GM12878 (cell line): ENCODE measurements at regions of chr5 and their contacts with region 1.

Region 1: GRCh38 chr5:95730730-95731570 is at the start of gene RHOBTB3:
- DNase-seq: no peak
- ATAC-seq: peak; percentile 53
- H3K4me3 ChIP-seq: peak within 1 kb of the TSS; percentile 78
- H3K27ac ChIP-seq: peak within 1 kb of the TSS; percentile 70
- H3K4me1 ChIP-seq: peaks cover 21% of the 10 kb centered on the region
- H3K27me3 ChIP-seq: no peaks in the 10 kb centered on the region
- CTCF ChIP-seq: peak in 2 of 3 experiments; percentile 4 to 22; a peak in 3 of 6 replicates
- EP300 ChIP-seq: 0 out of 4 replicates have a peak, but pooled peaks of 1 of the 2 experiments have one; percentile 8
- POLR2A ChIP-seq: peak; percentile 77
- RAD21 ChIP-seq: no peak
- polyA plus RNA-seq, gene RHOBTB3: 3.6 to 4.1 TPM

Region 2: GRCh38 chr5:95327211-95327610 is 403.7 kb before region 1 on chr5:
- CTCF ChIA-PET with region 1: no interaction called
- POLR2A ChIA-PET with region 1: no interaction called
- RAD21 ChIA-PET with region 1: no interaction called
- SMC1A ChIA-PET with region 1: no interaction called
- in situ Hi-C with region 1: no loop called
- intact Hi-C with region 1: no loop called
- DNase-seq: no peak
- ATAC-seq: no peak
- H3K4me3 ChIP-seq: no peak overlapping the region
- H3K27ac ChIP-seq: no peak overlapping the region
- H3K4me1 ChIP-seq: no peaks in the 10 kb centered on the region
- H3K27me3 ChIP-seq: no peaks in the 10 kb centered on the region
- CTCF ChIP-seq: no peak
- EP300 ChIP-seq: no peak
- POLR2A ChIP-seq: no peak
- RAD21 ChIP-seq: no peak

Region 3: DNA sequence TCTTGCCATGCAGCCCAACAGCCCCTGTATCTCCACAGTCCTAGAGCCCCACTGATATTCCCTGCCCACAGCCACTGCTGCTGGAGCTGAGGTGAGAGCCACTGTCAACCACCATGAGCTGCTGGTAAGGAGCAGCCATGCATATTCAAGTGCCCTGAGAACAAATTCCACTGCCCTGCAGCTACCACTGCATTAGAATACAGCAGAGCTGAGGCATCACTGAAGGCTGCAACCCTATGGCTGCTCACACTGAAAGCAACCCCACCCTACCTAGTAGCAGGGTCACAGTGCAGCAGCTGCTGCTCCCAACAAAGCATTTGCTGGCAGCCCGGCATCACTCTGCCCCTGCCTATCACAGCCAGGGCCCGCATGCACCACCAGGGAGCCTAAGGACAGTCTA is 244.8 kb before region 1 on chr5:
- CTCF ChIA-PET with region 1: no interaction called
- POLR2A ChIA-PET with region 1: no interaction called
- RAD21 ChIA-PET with region 1: no interaction called
- SMC1A ChIA-PET with region 1: no interaction called
- in situ Hi-C with region 1: no loop called
- intact Hi-C with region 1: no loop called
- DNase-seq: no peak
- ATAC-seq: no peak
- H3K4me3 ChIP-seq: no peak overlapping the region
- H3K27ac ChIP-seq: no peak overlapping the region
- H3K4me1 ChIP-seq: no peaks in the 10 kb centered on the region
- H3K27me3 ChIP-seq: no peaks in the 10 kb centered on the region
- CTCF ChIP-seq: no peak
- EP300 ChIP-seq: no peak
- POLR2A ChIP-seq: no peak
- RAD21 ChIP-seq: no peak

Region 4: GRCh38 chr5:95554647-95555548 is 176.1 kb before region 1 on chr5 and contains the starts of genes ARSK and SKIC3:
- CTCF ChIA-PET with region 1: interaction called, 3 read pairs
- POLR2A ChIA-PET with region 1: interaction called, 4 read pairs
- RAD21 ChIA-PET with region 1: interaction called, 3 read pairs
- SMC1A ChIA-PET with region 1: no interaction called
- in situ Hi-C with region 1: no loop called
- intact Hi-C with region 1: loop called (anchors 10 kb)
- DNase-seq: peak; percentile 99
- ATAC-seq: peak; percentile 94
- H3K4me3 ChIP-seq: peak within 1 kb of the TSS; percentile 87
- H3K27ac ChIP-seq: peak within 1 kb of the TSS; percentile 80
- H3K4me1 ChIP-seq: peaks cover 4% of the 10 kb centered on the region; the same call in 1 of the 2 replicates
- H3K27me3 ChIP-seq: no peaks in the 10 kb centered on the region
- CTCF ChIP-seq: peak in 2 of 3 experiments; percentile 27 to 33; a peak in 4 of 6 replicates
- EP300 ChIP-seq: no peak
- POLR2A ChIP-seq: peak; percentile 91
- RAD21 ChIP-seq: no peak
- polyA plus RNA-seq, gene ARSK: 1.6 to 3.5 TPM
- polyA plus RNA-seq, gene SKIC3: 23.6 to 42.1 TPM

Region 5: DNA sequence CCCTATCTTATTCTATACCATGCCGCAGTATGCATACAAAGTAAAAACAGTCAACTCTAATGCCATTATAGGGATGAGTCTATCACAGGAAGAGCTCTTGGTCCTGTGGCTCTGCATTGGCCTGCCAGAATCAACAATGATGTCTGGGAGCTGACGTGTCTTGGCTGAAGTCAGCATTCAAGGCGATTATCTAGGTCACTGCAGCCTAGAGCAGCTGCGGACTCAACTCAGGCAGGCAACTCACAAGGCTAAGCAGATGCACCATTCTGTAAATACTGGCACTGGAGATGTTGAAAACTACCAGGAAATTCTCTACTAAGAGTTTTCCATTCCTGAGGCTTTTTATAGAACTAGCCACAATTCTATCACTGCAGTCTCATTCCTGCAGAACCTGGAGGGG is 61.4 kb before region 1 on chr5:
- CTCF ChIA-PET with region 1: interaction called, 23 read pairs
- POLR2A ChIA-PET with region 1: no interaction called
- RAD21 ChIA-PET with region 1: interaction called, 25 read pairs
- SMC1A ChIA-PET with region 1: interaction called, 46 read pairs
- in situ Hi-C with region 1: no loop called
- intact Hi-C with region 1: loop called (anchors 1 kb)
- DNase-seq: no peak
- ATAC-seq: no peak
- H3K4me3 ChIP-seq: no peak overlapping the region
- H3K27ac ChIP-seq: no peak overlapping the region
- H3K4me1 ChIP-seq: no peaks in the 10 kb centered on the region
- H3K27me3 ChIP-seq: no peaks in the 10 kb centered on the region
- CTCF ChIP-seq: no peak
- EP300 ChIP-seq: no peak
- POLR2A ChIP-seq: no peak
- RAD21 ChIP-seq: no peak

Region 6: GRCh38 chr5:95760273-95761191 is 29.6 kb after region 1 on chr5:
- CTCF ChIA-PET with region 1: interaction called, 6 read pairs
- POLR2A ChIA-PET with region 1: interaction called, 6 read pairs
- RAD21 ChIA-PET with region 1: interaction called, 12 read pairs
- SMC1A ChIA-PET with region 1: interaction called, 9 read pairs
- in situ Hi-C with region 1: no loop called
- intact Hi-C with region 1: loop called (anchors 2 kb)
- DNase-seq: peak; percentile 64
- ATAC-seq: peak; percentile 97
- H3K4me3 ChIP-seq: peak overlapping the region; percentile 56
- H3K27ac ChIP-seq: peak overlapping the region; percentile 94
- H3K4me1 ChIP-seq: peaks cover 16% of the 10 kb centered on the region
- H3K27me3 ChIP-seq: no peaks in the 10 kb centered on the region
- CTCF ChIP-seq: no peak
- EP300 ChIP-seq: peak; percentile 3 to 71; a peak in 1 of 4 replicates
- POLR2A ChIP-seq: no peak
- RAD21 ChIP-seq: no peak

Region 7: GRCh38 chr5:95808686-95809413 is 77.9 kb after region 1 on chr5:
- CTCF ChIA-PET with region 1: interaction called, 7 read pairs
- POLR2A ChIA-PET with region 1: no interaction called
- RAD21 ChIA-PET with region 1: interaction called, 19 read pairs
- SMC1A ChIA-PET with region 1: interaction called, 20 read pairs
- in situ Hi-C with region 1: no loop called
- intact Hi-C with region 1: no loop called
- DNase-seq: peak; percentile 98
- ATAC-seq: peak; percentile 100
- H3K4me3 ChIP-seq: peak overlapping the region; percentile 36; the same call in 1 of the 2 replicates
- H3K27ac ChIP-seq: peak overlapping the region; percentile 97
- H3K4me1 ChIP-seq: peaks cover 29% of the 10 kb centered on the region
- H3K27me3 ChIP-seq: no peaks in the 10 kb centered on the region
- CTCF ChIP-seq: no peak
- EP300 ChIP-seq: peak; percentile 12 to 13; a peak in 1 of 4 replicates
- POLR2A ChIP-seq: no peak
- RAD21 ChIP-seq: no peak

Region 8: DNA sequence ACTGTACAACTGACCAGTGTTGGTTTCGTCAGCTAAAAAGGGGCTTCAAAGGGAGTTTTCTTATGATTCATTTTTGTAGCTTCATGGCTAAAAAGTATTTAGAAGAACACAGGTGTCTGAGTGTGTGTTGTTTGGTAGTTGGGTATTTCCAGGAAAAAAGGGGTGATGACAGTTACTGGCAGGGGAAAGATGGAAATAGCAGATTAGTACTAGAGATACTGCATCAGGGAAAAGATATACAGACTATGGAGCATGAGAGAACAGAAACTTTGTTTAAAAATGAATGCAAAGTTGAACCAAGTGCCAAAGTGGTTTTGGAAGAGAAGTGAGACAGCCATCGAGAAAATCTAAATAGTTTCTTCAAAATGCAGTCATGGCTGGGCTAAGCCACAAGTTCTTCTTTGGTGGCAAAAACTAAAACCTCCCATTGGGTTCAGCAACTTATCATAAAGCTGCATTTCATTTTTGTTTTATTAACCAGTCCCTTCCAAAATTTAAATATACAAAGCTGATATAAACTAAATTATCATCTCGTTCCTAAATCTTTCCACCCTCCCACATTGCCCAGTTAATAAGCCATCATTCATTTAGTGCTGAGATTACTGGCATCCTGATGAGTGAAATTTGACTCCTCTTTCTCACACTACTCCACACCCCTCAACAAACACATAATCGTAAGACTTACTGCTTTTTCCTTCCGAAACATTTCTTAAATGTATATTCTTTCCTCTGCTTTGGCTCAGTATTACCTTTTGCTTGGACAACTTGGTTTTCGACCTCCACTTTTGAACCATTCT is 197.2 kb after region 1 on chr5:
- CTCF ChIA-PET with region 1: no interaction called
- POLR2A ChIA-PET with region 1: no interaction called
- RAD21 ChIA-PET with region 1: interaction called, 3 read pairs
- SMC1A ChIA-PET with region 1: no interaction called
- in situ Hi-C with region 1: no loop called
- intact Hi-C with region 1: loop called (anchors 5 kb)
- DNase-seq: peak; percentile 91
- ATAC-seq: peak; percentile 61
- H3K4me3 ChIP-seq: peak overlapping the region; percentile 22
- H3K27ac ChIP-seq: peak overlapping the region; percentile 91
- H3K4me1 ChIP-seq: peaks cover 65% of the 10 kb centered on the region
- H3K27me3 ChIP-seq: no peaks in the 10 kb centered on the region
- CTCF ChIP-seq: no peak
- EP300 ChIP-seq: peak; percentile 95 to 97
- POLR2A ChIP-seq: no peak
- RAD21 ChIP-seq: 0 out of 2 replicates have a peak, but pooled peaks have one; percentile 12

Region 9: GRCh38 chr5:96904054-96904931 is 1173.3 kb after region 1 on chr5:
- CTCF ChIA-PET with region 1: no interaction called
- POLR2A ChIA-PET with region 1: no interaction called
- RAD21 ChIA-PET with region 1: no interaction called
- SMC1A ChIA-PET with region 1: no interaction called
- in situ Hi-C with region 1: no loop called
- intact Hi-C with region 1: no loop called
- DNase-seq: no peak
- ATAC-seq: peak; percentile 34; the same call in 2 of the 3 replicates
- H3K4me3 ChIP-seq: no peak overlapping the region
- H3K27ac ChIP-seq: no peak overlapping the region
- H3K4me1 ChIP-seq: peaks cover 3% of the 10 kb centered on the region; the same call in 1 of the 2 replicates
- H3K27me3 ChIP-seq: no peaks in the 10 kb centered on the region
- CTCF ChIP-seq: no peak
- EP300 ChIP-seq: no peak
- POLR2A ChIP-seq: no peak
- RAD21 ChIP-seq: no peak